PC-3 (cell line): ENCODE measurements at regions of chr20 and their contacts with region 1.

Region 1: DNA sequence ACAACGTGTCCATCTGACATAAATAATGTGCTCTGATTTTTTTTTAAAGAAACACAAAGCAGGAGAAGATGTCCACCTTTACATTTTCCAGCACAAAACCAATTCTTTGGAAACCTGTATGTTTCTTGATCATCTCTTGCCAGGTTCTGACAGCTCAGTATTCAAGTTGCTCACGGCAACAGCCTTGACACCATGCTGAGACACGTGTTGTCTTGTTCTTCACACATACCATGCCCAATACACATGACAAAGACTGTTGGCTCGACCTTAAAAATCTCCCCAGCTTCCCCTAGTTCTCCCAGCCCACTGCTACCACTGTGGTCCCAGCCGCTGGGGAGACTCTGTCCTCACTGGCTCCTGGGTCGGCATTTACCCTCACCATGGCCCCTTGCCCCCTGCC is 518.9 kb downstream of the PREX1 start:
- DNase-seq: no peak
- ATAC-seq: no peak
- H3K4me3 ChIP-seq: no peak overlapping the region
- H3K27ac ChIP-seq: no peak overlapping the region
- H3K4me1 ChIP-seq: no peaks in the 10 kb centered on the region
- H3K27me3 ChIP-seq: peaks cover 79% of the 10 kb centered on the region
- CTCF ChIP-seq: no peak

Region 2: GRCh38 chr20:47775854-47776253 is 533.0 kb before region 1 on chr20:
- CTCF ChIA-PET with region 1: no interaction called
- POLR2A ChIA-PET with region 1: interaction called, 11 read pairs
- intact Hi-C with region 1: no loop called
- DNase-seq: no peak
- ATAC-seq: no peak
- H3K4me3 ChIP-seq: no peak overlapping the region
- H3K27ac ChIP-seq: no peak overlapping the region
- H3K4me1 ChIP-seq: no peaks in the 10 kb centered on the region
- H3K27me3 ChIP-seq: no peaks in the 10 kb centered on the region
- CTCF ChIP-seq: no peak

Region 3: DNA sequence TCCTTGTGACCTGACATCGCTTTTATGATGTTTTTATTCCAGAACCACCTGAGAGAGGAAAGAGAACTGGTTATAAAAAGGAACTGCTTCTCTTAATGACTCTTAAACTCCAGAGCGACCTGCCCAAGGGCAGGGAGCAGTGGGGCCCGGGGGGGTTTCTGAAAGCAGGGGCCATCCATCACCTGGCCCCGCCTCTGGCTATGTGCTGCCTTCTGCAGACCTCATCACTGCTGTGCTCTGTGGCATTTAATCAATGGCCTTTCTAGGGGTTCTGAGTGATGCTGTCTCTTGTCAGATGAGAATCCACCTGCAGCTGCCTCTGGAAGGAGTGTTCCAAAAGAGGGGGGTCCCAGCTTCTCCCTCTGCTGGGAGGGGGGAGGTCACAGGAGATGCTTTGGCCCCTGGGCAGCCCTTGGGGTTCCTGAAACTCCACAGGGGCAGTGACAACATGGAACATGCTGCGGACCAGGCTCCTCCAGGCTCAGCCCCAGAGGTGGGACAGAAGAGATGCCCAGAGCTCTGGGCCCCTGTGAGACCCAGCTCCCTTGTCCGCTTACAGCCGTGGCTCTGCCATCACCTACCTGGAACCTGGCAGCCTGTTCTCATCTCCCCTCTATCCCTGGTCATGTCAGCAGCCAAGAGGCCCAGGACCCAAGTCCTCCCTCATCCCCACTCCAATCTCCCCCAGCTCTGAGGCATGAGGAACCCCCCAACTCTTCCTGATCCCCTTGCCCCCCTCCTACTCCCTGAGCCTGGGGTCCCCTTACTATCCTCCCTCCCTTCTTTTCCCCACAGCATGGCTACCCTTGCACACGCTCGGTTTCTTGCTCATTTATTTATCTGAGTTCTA is 346.4 kb before region 1 on chr20:
- CTCF ChIA-PET with region 1: no interaction called
- POLR2A ChIA-PET with region 1: interaction called, 19 read pairs
- intact Hi-C with region 1: no loop called
- DNase-seq: no peak
- ATAC-seq: no peak
- H3K4me3 ChIP-seq: no peak overlapping the region
- H3K27ac ChIP-seq: no peak overlapping the region
- H3K4me1 ChIP-seq: no peaks in the 10 kb centered on the region
- H3K27me3 ChIP-seq: no peaks in the 10 kb centered on the region
- CTCF ChIP-seq: no peak

Region 4: DNA sequence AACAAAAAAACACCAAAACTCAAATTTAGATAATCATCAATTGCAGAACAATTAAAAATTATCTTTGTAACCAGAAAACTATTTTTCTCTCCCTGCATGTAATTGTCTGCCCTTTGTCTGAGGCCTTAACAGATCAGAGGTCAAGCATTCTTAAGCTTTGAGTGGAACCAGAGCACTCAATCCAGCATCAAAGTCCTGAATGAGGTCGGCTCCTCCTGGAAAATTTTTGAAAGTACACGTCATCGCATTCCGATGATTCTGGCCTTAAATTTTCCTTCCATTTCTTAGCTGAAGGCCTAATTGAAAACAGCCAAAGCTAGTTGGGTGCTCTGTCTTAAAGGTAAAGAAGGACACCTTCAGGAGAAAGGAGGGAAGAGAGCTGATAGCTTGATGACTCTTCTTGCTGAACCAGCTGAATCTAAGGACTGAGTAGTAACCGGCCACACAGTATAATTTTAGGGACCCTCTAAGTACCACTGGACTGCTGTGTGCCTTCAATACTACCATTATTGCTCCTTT is 13.4 kb before region 1 on chr20:
- CTCF ChIA-PET with region 1: no interaction called
- POLR2A ChIA-PET with region 1: no interaction called
- intact Hi-C with region 1: no loop called
- DNase-seq: peak; percentile 98
- ATAC-seq: peak; percentile 85
- H3K4me3 ChIP-seq: no peak overlapping the region
- H3K27ac ChIP-seq: peak overlapping the region; percentile 36
- H3K4me1 ChIP-seq: peaks cover 50% of the 10 kb centered on the region
- H3K27me3 ChIP-seq: no peaks in the 10 kb centered on the region
- CTCF ChIP-seq: peak; percentile 83

Region 5: GRCh38 chr20:48383846-48384673 is 75.2 kb after region 1 on chr20:
- CTCF ChIA-PET with region 1: no interaction called
- POLR2A ChIA-PET with region 1: no interaction called
- intact Hi-C with region 1: no loop called
- DNase-seq: no peak
- ATAC-seq: no peak
- H3K4me3 ChIP-seq: no peak overlapping the region
- H3K27ac ChIP-seq: no peak overlapping the region
- H3K4me1 ChIP-seq: no peaks in the 10 kb centered on the region
- H3K27me3 ChIP-seq: no peaks in the 10 kb centered on the region; the same call in none of the 2 replicates
- CTCF ChIP-seq: no peak